ENCODE measurements at regions of chr11 and their contacts with region 1.

Region 1: GRCh38 chr11:91608677-91609076 is 615.9 kb upstream of the FAT3 start:
- DNase-seq: no peak
- ATAC-seq: no peak
- H3K4me3 ChIP-seq: no peak overlapping the region
- H3K27ac ChIP-seq: no peak overlapping the region
- H3K4me1 ChIP-seq: no peaks in the 10 kb centered on the region
- H3K27me3 ChIP-seq: no peaks in the 10 kb centered on the region
- CTCF ChIP-seq: no peak

Region 2: DNA sequence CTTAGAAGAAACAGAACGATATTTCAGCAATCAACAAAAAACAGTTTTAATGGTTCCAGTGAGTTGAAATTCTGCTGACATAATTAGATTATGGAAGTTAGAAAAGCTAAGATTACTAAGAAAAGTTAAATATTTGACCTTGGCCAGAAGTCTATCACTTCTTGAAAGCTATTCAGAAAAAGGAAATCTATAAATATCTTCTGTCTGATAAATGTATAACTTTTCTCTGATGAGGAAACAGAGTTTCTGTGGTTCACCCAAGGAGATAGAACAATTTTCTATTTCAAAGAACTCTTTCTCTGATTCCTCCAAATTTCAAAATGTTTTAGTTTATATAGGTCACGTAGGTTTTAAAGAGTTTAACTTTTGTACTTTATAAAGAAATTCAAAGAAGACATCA is 947.4 kb before region 1 on chr11:
- intact Hi-C with region 1: no loop called
- DNase-seq: no peak
- ATAC-seq: no peak
- H3K4me3 ChIP-seq: no peak overlapping the region
- H3K27ac ChIP-seq: no peak overlapping the region
- H3K4me1 ChIP-seq: no peaks in the 10 kb centered on the region
- H3K27me3 ChIP-seq: no peaks in the 10 kb centered on the region
- CTCF ChIP-seq: no peak

Region 3: DNA sequence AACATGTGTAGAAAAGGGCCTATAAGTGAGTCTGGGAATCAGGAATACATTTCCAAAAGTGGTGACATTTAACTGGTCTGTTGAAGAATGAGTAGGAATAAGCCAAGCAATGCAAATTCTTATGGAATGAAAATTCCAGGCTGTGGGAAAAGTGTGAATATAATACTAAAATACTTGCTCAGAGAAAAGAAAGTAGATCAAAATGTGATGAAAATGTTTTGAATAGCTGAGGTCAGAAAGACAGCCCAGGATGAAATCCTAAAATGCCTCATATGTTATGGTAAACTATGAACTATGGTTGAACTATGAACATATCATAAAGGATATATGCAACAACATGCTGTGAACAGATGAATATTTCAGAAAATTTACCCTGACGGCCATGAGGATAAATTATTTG is 72.3 kb before region 1 on chr11:
- intact Hi-C with region 1: loop called in 1 of 10 experiments (anchors 10 kb)
- DNase-seq: no peak
- ATAC-seq: no peak
- H3K4me3 ChIP-seq: no peak overlapping the region
- H3K27ac ChIP-seq: no peak overlapping the region
- H3K4me1 ChIP-seq: no peaks in the 10 kb centered on the region
- H3K27me3 ChIP-seq: no peaks in the 10 kb centered on the region
- CTCF ChIP-seq: no peak

Region 4: GRCh38 chr11:91653079-91653754 is 44.5 kb after region 1 on chr11:
- intact Hi-C with region 1: no loop called
- DNase-seq: no peak
- ATAC-seq: peak in 2 of 8 donors; percentile 20 to 47
- H3K4me3 ChIP-seq: no peak overlapping the region
- H3K27ac ChIP-seq: no peak overlapping the region
- H3K4me1 ChIP-seq: no peaks in the 10 kb centered on the region
- H3K27me3 ChIP-seq: no peaks in the 10 kb centered on the region
- CTCF ChIP-seq: no peak

Measured in heart right ventricle (tissue), 16 donors.